Activated T-helper 2 cell treated with anti-CD3 and anti-CD28 coated beads, Interferon-gamma antibody, Interleukin-2, Interleukin-4, amounts not matched to agents 10 μg/mL and 5 μg/mL and 100 μg/mL, durations not matched to agents 14 hours and 24 hours and 36 hours (primary cell): ENCODE measurements at regions of chr20 and their contacts with region 1.

Region 1: GRCh38 chr20:35092524-35093266 is at the start of gene TRPC4AP:
- DNase-seq: peak; percentile 88
- H3K4me3 Mint-ChIP-seq: peak within 1 kb of the TSS; percentile 94
- H3K27ac Mint-ChIP-seq: peak within 1 kb of the TSS; percentile 98
- H3K4me1 Mint-ChIP-seq: peaks cover 43% of the 10 kb centered on the region
- H3K27me3 Mint-ChIP-seq: no peaks in the 10 kb centered on the region
- total RNA-seq, gene TRPC4AP: 52.3 and 52.4 TPM in 2 replicates

Region 2: GRCh38 chr20:34876162-34877001 is 216.3 kb before region 1 on chr20 and contains the start of gene ACSS2:
- intact Hi-C with region 1: loop called (anchors 2 kb)
- DNase-seq: peak; percentile 96
- H3K4me3 Mint-ChIP-seq: peak within 1 kb of the TSS; percentile 95
- H3K27ac Mint-ChIP-seq: peak within 1 kb of the TSS; percentile 84
- H3K4me1 Mint-ChIP-seq: peaks cover 66% of the 10 kb centered on the region
- H3K27me3 Mint-ChIP-seq: peaks cover 2% of the 10 kb centered on the region
- total RNA-seq, gene ACSS2: 51.3 and 59.4 TPM in 2 replicates

Region 3: GRCh38 chr20:35027301-35027700 is 65.4 kb before region 1 on chr20:
- intact Hi-C with region 1: loop called (anchors 5 kb)
- DNase-seq: no peak
- H3K4me3 Mint-ChIP-seq: no peak overlapping the region
- H3K27ac Mint-ChIP-seq: no peak overlapping the region
- H3K4me1 Mint-ChIP-seq: peaks cover 19% of the 10 kb centered on the region
- H3K27me3 Mint-ChIP-seq: no peaks in the 10 kb centered on the region

Region 4: GRCh38 chr20:35207950-35208611 is 115.4 kb after region 1 on chr20:
- intact Hi-C with region 1: loop called (anchors 1 kb)
- DNase-seq: peak; percentile 63
- H3K4me3 Mint-ChIP-seq: no peak overlapping the region
- H3K27ac Mint-ChIP-seq: no peak overlapping the region
- H3K4me1 Mint-ChIP-seq: no peaks in the 10 kb centered on the region
- H3K27me3 Mint-ChIP-seq: no peaks in the 10 kb centered on the region

Region 5: GRCh38 chr20:35741892-35742740 is 649.4 kb after region 1 on chr20 and contains the start of gene RBM39:
- intact Hi-C with region 1: loop called (anchors 5 kb)
- DNase-seq: peak; percentile 100
- H3K4me3 Mint-ChIP-seq: peak within 1 kb of the TSS; percentile 97
- H3K27ac Mint-ChIP-seq: peak within 1 kb of the TSS; percentile 99
- H3K4me1 Mint-ChIP-seq: peaks cover 34% of the 10 kb centered on the region
- H3K27me3 Mint-ChIP-seq: no peaks in the 10 kb centered on the region
- total RNA-seq, gene RBM39: 358 and 360 TPM in 2 replicates